Common myeloid progenitor, CD34-positive (primary cell): ENCODE measurements at regions of chr15 and their contacts with region 1.

Region 1: GRCh38 chr15:85412956-85413854 is 32.8 kb downstream of the AKAP13 start:
- DNase-seq: peak; percentile 78 to 92 (median 87)
- H3K4me3 ChIP-seq: peak overlapping the region in 1 of 7 experiments; percentile 28
- H3K27ac ChIP-seq: peak overlapping the region; percentile 21 to 55
- H3K4me1 ChIP-seq: peaks cover 18 to 38% (median 25%) of the 10 kb centered on the region in 4 experiments
- H3K27me3 ChIP-seq: no peaks in the 10 kb centered on the region

Region 2: GRCh38 chr15:85289677-85290365 is 123.4 kb before region 1 on chr15:
- CTCF ChIA-PET with region 1: interaction called, 101 read pairs
- POLR2A ChIA-PET with region 1: no interaction called
- DNase-seq: peak; percentile 53 to 67 (median 66)
- H3K4me3 ChIP-seq: no peak overlapping the region
- H3K27ac ChIP-seq: no peak overlapping the region
- H3K4me1 ChIP-seq: no peaks in the 10 kb centered on the region
- H3K27me3 ChIP-seq: no peaks in the 10 kb centered on the region

Region 3: GRCh38 chr15:85296615-85297402 is 116.4 kb before region 1 on chr15:
- CTCF ChIA-PET with region 1: interaction called, 101 read pairs
- POLR2A ChIA-PET with region 1: interaction called, 4 read pairs
- DNase-seq: peak; percentile 78 to 86 (median 84)
- H3K4me3 ChIP-seq: peak overlapping the region in 3 of 7 experiments; percentile 12 to 72 (median 50)
- H3K27ac ChIP-seq: no peak overlapping the region
- H3K4me1 ChIP-seq: peaks cover 0 to 8% (median 6%) of the 10 kb centered on the region in 4 experiments
- H3K27me3 ChIP-seq: no peaks in the 10 kb centered on the region

Region 4: GRCh38 chr15:85430406-85431204 is 17.4 kb after region 1 on chr15:
- CTCF ChIA-PET with region 1: interaction called, 13 read pairs
- POLR2A ChIA-PET with region 1: no interaction called
- DNase-seq: no peak
- H3K4me3 ChIP-seq: no peak overlapping the region
- H3K27ac ChIP-seq: no peak overlapping the region
- H3K4me1 ChIP-seq: no peaks in the 10 kb centered on the region
- H3K27me3 ChIP-seq: no peaks in the 10 kb centered on the region